Naive thymus-derived CD4-positive, alpha-beta T cell (primary cell): ENCODE measurements at regions of chr1 and their contacts with region 1.

Region 1: GRCh38 chr1:32247983-32248889 is 1.2 kb downstream of the FAM167B start:
- DNase-seq: peak; percentile 43 to 84 (median 56)
- ATAC-seq: peak; percentile 45
- H3K4me3 ChIP-seq: peak overlapping the region; percentile 52
- H3K4me3 Mint-ChIP-seq: peak overlapping the region; percentile 66 to 100 (median 98)
- H3K27ac ChIP-seq: peak overlapping the region; percentile 91
- H3K27ac Mint-ChIP-seq: peak overlapping the region; percentile 92 to 100 (median 99)
- H3K4me1 ChIP-seq: peaks cover 37 to 51% of the 10 kb centered on the region in 2 donors
- H3K4me1 Mint-ChIP-seq: peaks cover 32 to 60% (median 52%) of the 10 kb centered on the region in 7 donors
- H3K27me3 ChIP-seq: no peaks in the 10 kb centered on the region
- H3K27me3 Mint-ChIP-seq: peaks cover 0 to 2% (median 0%) of the 10 kb centered on the region in 5 donors

Region 2: DNA sequence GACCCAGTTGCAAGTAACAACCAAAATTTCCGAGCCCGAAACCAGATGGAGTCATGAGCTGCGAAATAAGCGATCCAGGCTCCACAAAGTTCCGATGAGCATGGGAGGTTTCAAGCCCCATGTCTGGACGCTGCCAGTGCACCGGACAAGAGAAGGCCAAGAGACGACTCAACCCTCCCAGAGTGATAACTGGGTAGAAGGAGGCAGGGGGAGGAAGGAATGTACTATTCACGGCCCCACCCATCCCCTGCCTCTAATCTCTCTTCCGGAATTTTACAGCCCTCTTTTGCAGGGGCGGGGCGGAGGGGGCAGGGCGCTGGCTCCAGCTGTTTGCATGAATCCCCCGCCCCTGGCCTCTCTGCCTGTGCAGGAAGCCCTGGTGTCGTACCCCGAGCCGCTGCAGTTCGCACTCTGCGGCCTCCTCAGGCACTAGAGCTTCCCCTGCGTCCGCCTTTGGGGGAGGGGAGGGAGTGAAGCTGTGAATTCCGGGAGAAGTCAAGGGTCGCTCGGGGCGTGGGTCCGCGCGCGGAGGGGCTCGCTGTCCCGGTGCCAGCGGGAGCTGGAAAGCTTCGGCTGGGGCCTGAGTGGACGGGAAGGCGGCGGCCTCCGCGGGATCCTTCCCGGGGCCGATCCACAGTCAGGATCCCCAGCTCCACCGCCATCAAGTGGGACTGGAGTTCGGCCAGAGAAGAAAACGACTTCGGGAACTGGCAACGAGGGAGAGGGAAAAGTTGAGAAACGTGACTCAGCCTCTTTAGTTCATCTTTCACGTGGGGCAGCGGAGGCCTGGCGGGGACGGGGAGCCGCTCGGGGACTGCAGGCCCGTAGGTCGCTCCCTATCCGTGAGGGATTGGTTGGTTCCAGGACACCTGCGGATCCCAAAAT is 303.8 kb before region 1 on chr1:
- CTCF ChIA-PET with region 1: no interaction called
- POLR2A ChIA-PET with region 1: no interaction called
- intact Hi-C with region 1: loop called in 1 of 2 experiments (anchors 5 kb)
- DNase-seq: peak; percentile 48 to 88 (median 87)
- ATAC-seq: peak; percentile 81
- H3K4me3 ChIP-seq: peak overlapping the region; percentile 68
- H3K4me3 Mint-ChIP-seq: peak overlapping the region; percentile 83 to 93 (median 89)
- H3K27ac ChIP-seq: peak overlapping the region; percentile 76
- H3K27ac Mint-ChIP-seq: peak overlapping the region; percentile 92 to 97 (median 94)
- H3K4me1 ChIP-seq: peaks cover 45 to 46% of the 10 kb centered on the region in 2 donors
- H3K4me1 Mint-ChIP-seq: peaks cover 33 to 64% (median 47%) of the 10 kb centered on the region in 7 donors
- H3K27me3 ChIP-seq: no peaks in the 10 kb centered on the region
- H3K27me3 Mint-ChIP-seq: no peaks in the 10 kb centered on the region

Region 3: GRCh38 chr1:32200226-32201010 is 47.8 kb before region 1 on chr1 and contains the start of gene CCDC28B:
- CTCF ChIA-PET with region 1: interaction called, 3 read pairs
- POLR2A ChIA-PET with region 1: interaction called, 8 read pairs
- intact Hi-C with region 1: loop called (anchors 1 to 2 kb)
- DNase-seq: peak; percentile 35 to 71 (median 62)
- ATAC-seq: peak; percentile 59
- H3K4me3 ChIP-seq: peak within 1 kb of the TSS; percentile 96
- H3K4me3 Mint-ChIP-seq: peak within 1 kb of the TSS; percentile 78 to 99 (median 94)
- H3K27ac ChIP-seq: peak within 1 kb of the TSS; percentile 99
- H3K27ac Mint-ChIP-seq: peak within 1 kb of the TSS; percentile 72 to 98 (median 91)
- H3K4me1 ChIP-seq: peaks cover 32 to 35% of the 10 kb centered on the region in 2 donors
- H3K4me1 Mint-ChIP-seq: peaks cover 41 to 73% (median 60%) of the 10 kb centered on the region in 7 donors
- H3K27me3 ChIP-seq: no peaks in the 10 kb centered on the region
- H3K27me3 Mint-ChIP-seq: no peaks in the 10 kb centered on the region
- total RNA-seq, gene CCDC28B: 6.2 to 39.0 (median 8.7) TPM

Region 4: GRCh38 chr1:32266921-32267591 is 18.8 kb after region 1 on chr1:
- CTCF ChIA-PET with region 1: interaction called, 6 read pairs
- POLR2A ChIA-PET with region 1: interaction called, 738 read pairs
- intact Hi-C with region 1: loop called in 1 of 2 experiments (anchors 1 kb)
- DNase-seq: peak in 6 of 9 donors; percentile 41 to 68 (median 52)
- ATAC-seq: peak; percentile 69
- H3K4me3 ChIP-seq: peak overlapping the region; percentile 18
- H3K4me3 Mint-ChIP-seq: peak overlapping the region; percentile 70 to 96 (median 86)
- H3K27ac ChIP-seq: peak overlapping the region; percentile 64
- H3K27ac Mint-ChIP-seq: peak overlapping the region; percentile 93 to 100 (median 99)
- H3K4me1 ChIP-seq: peaks cover 55 to 78% of the 10 kb centered on the region in 2 donors
- H3K4me1 Mint-ChIP-seq: peaks cover 42 to 72% (median 54%) of the 10 kb centered on the region in 7 donors
- H3K27me3 ChIP-seq: no peaks in the 10 kb centered on the region
- H3K27me3 Mint-ChIP-seq: no peaks in the 10 kb centered on the region

Region 5: GRCh38 chr1:32273388-32274208 is 25.4 kb after region 1 on chr1:
- CTCF ChIA-PET with region 1: interaction called, 30 read pairs
- POLR2A ChIA-PET with region 1: interaction called, 738 read pairs
- intact Hi-C with region 1: loop called in 1 of 2 experiments (anchors 1 kb)
- DNase-seq: peak; percentile 34 to 96 (median 88)
- ATAC-seq: peak; percentile 94
- H3K4me3 ChIP-seq: peak overlapping the region; percentile 49
- H3K4me3 Mint-ChIP-seq: peak overlapping the region; percentile 74 to 91 (median 88)
- H3K27ac ChIP-seq: peak overlapping the region; percentile 79
- H3K27ac Mint-ChIP-seq: peak overlapping the region; percentile 77 to 99 (median 97)
- H3K4me1 ChIP-seq: peaks cover 42 to 69% of the 10 kb centered on the region in 2 donors
- H3K4me1 Mint-ChIP-seq: peaks cover 45 to 86% (median 62%) of the 10 kb centered on the region in 7 donors
- H3K27me3 ChIP-seq: no peaks in the 10 kb centered on the region
- H3K27me3 Mint-ChIP-seq: no peaks in the 10 kb centered on the region

Region 6: DNA sequence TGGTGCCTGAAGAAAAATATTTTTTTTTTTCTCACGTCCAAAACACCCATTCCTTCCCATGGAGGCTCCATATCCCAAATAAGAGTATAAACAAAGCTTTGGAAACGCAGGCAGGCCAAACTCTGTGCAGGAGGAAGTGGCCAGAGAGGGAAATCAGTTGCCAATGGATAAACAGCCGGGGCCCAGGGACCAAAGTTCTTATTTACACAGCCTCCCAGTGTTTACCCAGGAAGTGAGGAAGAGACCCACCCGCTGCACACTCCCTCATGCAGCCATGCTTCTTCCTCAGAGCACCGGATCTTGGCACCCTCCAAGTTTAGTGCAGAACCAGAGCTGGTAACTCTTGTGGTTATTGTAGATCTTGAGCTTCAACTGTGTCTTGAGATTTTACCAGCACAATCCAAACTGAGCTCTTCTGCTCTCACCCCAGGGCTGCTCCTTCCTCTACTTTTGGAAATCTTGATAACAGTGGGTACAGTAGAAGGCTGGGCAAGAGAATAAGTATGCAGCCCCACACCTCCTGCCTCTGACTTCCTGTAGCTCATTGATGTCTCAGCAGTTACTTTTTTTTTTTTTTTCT is 73.6 kb after region 1 on chr1:
- CTCF ChIA-PET with region 1: interaction called, 6 read pairs
- POLR2A ChIA-PET with region 1: interaction called, 19 read pairs
- intact Hi-C with region 1: loop called in 1 of 2 experiments (anchors 2 kb)
- DNase-seq: peak in 7 of 9 donors; percentile 37 to 73 (median 57)
- ATAC-seq: peak; percentile 90
- H3K4me3 ChIP-seq: peak overlapping the region; percentile 33
- H3K4me3 Mint-ChIP-seq: peak overlapping the region; percentile 58 to 85 (median 74)
- H3K27ac ChIP-seq: peak overlapping the region; percentile 58
- H3K27ac Mint-ChIP-seq: peak overlapping the region; percentile 62 to 96 (median 94)
- H3K4me1 ChIP-seq: peaks cover 33 to 46% of the 10 kb centered on the region in 2 donors
- H3K4me1 Mint-ChIP-seq: peaks cover 27 to 69% (median 47%) of the 10 kb centered on the region in 7 donors
- H3K27me3 ChIP-seq: no peaks in the 10 kb centered on the region
- H3K27me3 Mint-ChIP-seq: no peaks in the 10 kb centered on the region

Region 7: DNA sequence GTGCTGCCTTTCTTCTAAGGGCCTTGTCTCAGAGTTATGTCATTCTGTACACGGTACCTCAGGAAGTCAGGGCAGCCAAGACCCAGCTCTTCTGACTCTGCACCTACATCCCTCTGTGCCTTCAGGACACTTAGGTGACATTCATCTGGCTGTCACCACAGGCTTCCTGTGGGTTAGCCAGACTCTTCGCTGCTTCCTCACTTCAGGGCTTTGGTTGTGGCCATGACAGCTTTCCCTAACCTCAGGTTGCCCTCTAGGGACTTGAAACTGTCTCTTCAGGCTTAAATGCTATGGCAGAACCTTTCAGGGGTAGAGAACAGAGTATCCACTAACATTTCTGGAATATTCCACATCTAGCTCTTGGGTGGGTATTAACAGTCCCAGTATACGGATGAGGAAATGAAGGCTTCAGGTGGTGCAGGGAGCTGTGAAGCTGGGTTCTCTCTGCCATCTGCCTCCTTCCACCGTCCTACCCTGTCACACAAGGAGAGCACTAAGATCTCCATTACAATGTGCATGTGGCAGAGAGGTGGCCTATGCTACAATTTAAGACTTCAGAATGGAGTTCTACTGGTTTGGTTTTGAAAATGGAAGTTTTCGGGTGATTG is 124.0 kb after region 1 on chr1:
- CTCF ChIA-PET with region 1: interaction called, 3 read pairs
- POLR2A ChIA-PET with region 1: interaction called, 15 read pairs
- intact Hi-C with region 1: no loop called
- DNase-seq: peak; percentile 22 to 78 (median 68)
- ATAC-seq: peak; percentile 88
- H3K4me3 ChIP-seq: no peak overlapping the region
- H3K4me3 Mint-ChIP-seq: peak overlapping the region in 2 of 10 donors; percentile 6 to 9
- H3K27ac ChIP-seq: peak overlapping the region; percentile 20
- H3K27ac Mint-ChIP-seq: peak overlapping the region in 7 of 9 donors; percentile 1 to 75 (median 57)
- H3K4me1 ChIP-seq: peaks cover 12% of the 10 kb centered on the region in 2 donors
- H3K4me1 Mint-ChIP-seq: peaks cover 15 to 22% (median 20%) of the 10 kb centered on the region in 7 donors
- H3K27me3 ChIP-seq: no peaks in the 10 kb centered on the region
- H3K27me3 Mint-ChIP-seq: no peaks in the 10 kb centered on the region

Region 8: DNA sequence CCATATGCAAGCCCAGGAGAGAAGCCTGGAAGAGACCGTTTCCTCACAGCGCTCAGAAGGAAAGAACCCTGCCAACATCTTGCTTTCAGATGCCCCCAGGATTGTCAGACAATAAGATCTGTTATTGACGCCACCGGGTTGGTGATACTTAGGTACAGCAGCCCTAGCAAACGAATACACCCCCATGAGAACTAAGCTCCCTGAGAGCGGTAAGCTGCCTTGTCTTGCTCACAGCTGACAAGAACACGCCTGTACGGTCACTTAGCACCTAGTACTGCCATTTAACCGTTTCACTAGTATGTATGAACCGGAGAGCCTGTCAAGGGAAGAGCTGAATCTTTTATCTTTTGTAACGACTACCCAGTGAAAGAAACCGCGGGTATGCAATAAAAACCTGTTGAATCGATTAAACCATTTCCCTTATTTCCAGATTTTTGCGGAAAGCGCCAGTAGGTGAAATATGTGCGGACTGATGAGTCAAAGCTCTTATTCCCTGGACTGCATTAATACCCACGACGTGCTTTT is 216.0 kb after region 1 on chr1:
- CTCF ChIA-PET with region 1: no interaction called
- POLR2A ChIA-PET with region 1: no interaction called
- intact Hi-C with region 1: no loop called
- DNase-seq: peak in 1 of 9 donors; percentile 0
- ATAC-seq: no peak
- H3K4me3 ChIP-seq: peak overlapping the region; percentile 26
- H3K4me3 Mint-ChIP-seq: peak overlapping the region; percentile 34 to 88 (median 72)
- H3K27ac ChIP-seq: no peak overlapping the region
- H3K27ac Mint-ChIP-seq: no peak overlapping the region
- H3K4me1 ChIP-seq: peaks cover 8 to 13% of the 10 kb centered on the region in 2 donors
- H3K4me1 Mint-ChIP-seq: peaks cover 6 to 18% (median 14%) of the 10 kb centered on the region in 7 donors
- H3K27me3 ChIP-seq: peaks cover 0 to 11% of the 10 kb centered on the region in 2 donors
- H3K27me3 Mint-ChIP-seq: peaks cover 44 to 62% (median 55%) of the 10 kb centered on the region in 5 donors